Endothelial cell of umbilical vein (primary cell): ENCODE measurements at regions of chr13 and their contacts with region 1.

Region 1: DNA sequence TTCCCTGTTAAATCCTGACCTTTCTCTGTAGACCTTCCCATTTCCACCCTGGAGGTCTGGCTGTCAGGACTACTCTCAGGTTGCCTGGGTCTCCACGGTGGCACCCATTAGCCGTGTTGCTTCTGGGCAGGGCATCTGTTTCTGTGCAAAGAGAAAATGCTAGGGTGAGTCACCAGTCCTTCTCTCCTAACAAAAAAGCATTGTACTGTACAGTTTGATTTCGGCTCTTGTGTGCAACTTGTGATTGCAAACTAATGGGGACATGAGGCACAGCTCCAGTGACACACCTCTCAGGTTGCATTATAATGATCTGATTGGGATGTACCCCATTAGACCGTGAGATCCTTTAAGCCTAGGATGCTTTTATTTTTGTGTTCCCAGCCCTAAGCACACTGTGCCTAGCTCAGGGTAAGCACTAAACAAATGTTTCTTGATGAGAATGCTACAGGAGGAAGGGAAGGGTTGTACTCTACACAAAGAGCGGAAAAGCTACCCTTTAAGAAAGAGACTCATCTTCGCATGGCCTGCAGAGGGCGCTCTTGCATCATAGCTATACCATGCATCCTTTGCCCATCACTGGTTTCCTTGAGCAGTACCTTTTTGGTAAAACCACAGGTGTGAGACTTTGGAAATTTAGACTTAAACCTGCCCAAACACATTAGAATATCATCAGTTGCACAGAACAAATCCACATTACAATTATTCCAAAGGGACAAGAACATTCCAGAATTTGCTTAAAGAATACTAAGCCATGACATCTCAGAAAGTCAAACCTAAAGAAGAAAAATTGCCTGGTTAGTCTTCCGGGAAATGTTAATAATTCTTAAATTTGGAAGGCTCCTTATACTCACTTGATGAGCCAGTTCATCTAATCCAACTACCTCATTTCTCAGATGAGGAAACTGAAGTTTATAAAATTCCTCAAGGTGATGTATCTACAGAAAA is 20.3 kb upstream of the TRIM13 start:
- DNase-seq: peak; percentile 77
- H3K4me3 ChIP-seq: no peak overlapping the region
- H3K27ac ChIP-seq: no peak overlapping the region
- H3K4me1 ChIP-seq: no peaks in the 10 kb centered on the region
- H3K27me3 ChIP-seq: no peaks in the 10 kb centered on the region
- CTCF ChIP-seq: peak; percentile 88 to 90
- POLR2A ChIP-seq: no peak

Region 2: DNA sequence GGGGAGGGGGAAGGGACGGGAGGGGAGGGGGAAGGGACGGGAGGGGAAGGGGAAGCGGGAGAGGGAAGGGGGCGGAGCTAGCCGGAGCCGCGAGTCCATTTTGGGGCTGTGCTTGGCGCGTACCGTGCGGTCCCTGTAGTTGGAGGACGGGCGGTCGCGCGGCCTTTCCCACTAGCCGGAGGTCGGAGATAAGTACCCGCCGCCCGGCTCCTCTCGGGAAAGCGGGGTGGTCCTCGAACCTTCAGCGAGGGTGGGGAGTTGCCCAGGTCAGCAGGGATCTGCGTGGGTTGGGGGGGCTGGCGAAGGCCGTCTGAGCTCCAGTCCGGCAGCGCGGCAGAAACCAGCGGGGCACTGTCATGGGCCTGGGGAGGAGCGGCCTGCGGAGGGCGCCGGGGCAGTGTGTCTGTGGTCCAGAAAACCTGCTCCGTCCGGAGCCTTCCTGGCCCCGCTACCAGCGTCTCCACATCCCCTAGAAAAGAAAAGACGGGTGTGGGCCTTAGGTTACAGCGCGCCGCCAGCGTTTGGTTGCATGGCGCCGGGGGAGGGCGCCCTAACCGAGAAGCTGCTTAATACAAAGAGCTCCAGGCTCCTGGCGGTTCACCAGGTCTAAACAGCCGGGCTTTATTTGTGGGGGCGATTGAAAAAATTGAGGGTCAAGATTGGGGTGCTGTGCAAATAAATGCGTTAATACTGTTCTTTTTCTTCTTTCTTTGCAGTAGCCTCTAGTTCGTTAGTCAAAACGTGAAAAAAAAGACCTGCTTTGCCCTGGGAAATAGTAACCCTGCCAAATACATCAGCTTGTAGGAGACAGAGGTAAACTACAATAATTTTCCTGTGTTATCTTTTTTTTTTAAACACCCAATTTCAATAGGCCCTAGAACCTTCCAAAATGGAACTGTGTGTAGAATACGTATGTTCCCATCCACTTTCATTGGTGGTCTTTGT is 20.6 kb after region 1 on chr13 and contains the start of gene TRIM13:
- CTCF ChIA-PET with region 1: interaction called, 25 read pairs
- POLR2A ChIA-PET with region 1: interaction called, 3 read pairs
- dilution Hi-C with region 1: no loop called
- intact Hi-C with region 1: no loop called
- DNase-seq: peak; percentile 93
- H3K4me3 ChIP-seq: peak within 1 kb of the TSS; percentile 84 to 98 (median 95)
- H3K27ac ChIP-seq: peak within 1 kb of the TSS; percentile 93
- H3K4me1 ChIP-seq: peaks cover 35% of the 10 kb centered on the region
- H3K27me3 ChIP-seq: no peaks in the 10 kb centered on the region
- CTCF ChIP-seq: peak; percentile 80 to 81
- POLR2A ChIP-seq: peak; percentile 84
- total RNA-seq, gene TRIM13: 25.9 and 28.2 TPM in 2 replicates

Region 3: GRCh38 chr13:50170447-50171037 is 194.0 kb after region 1 on chr13:
- CTCF ChIA-PET with region 1: interaction called, 14 read pairs
- POLR2A ChIA-PET with region 1: no interaction called
- dilution Hi-C with region 1: no loop called
- intact Hi-C with region 1: no loop called
- DNase-seq: peak; percentile 69
- H3K4me3 ChIP-seq: no peak overlapping the region
- H3K27ac ChIP-seq: no peak overlapping the region
- H3K4me1 ChIP-seq: no peaks in the 10 kb centered on the region
- H3K27me3 ChIP-seq: no peaks in the 10 kb centered on the region
- CTCF ChIP-seq: peak; percentile 8 to 24
- POLR2A ChIP-seq: no peak

Region 4: GRCh38 chr13:50911937-50912795 is 935.6 kb after region 1 on chr13:
- CTCF ChIA-PET with region 1: interaction called, 96 read pairs
- POLR2A ChIA-PET with region 1: interaction called, 5 read pairs
- dilution Hi-C with region 1: no loop called
- intact Hi-C with region 1: loop called (anchors 1 kb)
- DNase-seq: peak; percentile 78
- H3K4me3 ChIP-seq: no peak overlapping the region
- H3K27ac ChIP-seq: no peak overlapping the region
- H3K4me1 ChIP-seq: peaks cover 29% of the 10 kb centered on the region
- H3K27me3 ChIP-seq: no peaks in the 10 kb centered on the region
- CTCF ChIP-seq: peak; percentile 83 to 86
- POLR2A ChIP-seq: no peak